ENCODE measurements at regions of chr11 and their contacts with region 1.

Region 1: DNA sequence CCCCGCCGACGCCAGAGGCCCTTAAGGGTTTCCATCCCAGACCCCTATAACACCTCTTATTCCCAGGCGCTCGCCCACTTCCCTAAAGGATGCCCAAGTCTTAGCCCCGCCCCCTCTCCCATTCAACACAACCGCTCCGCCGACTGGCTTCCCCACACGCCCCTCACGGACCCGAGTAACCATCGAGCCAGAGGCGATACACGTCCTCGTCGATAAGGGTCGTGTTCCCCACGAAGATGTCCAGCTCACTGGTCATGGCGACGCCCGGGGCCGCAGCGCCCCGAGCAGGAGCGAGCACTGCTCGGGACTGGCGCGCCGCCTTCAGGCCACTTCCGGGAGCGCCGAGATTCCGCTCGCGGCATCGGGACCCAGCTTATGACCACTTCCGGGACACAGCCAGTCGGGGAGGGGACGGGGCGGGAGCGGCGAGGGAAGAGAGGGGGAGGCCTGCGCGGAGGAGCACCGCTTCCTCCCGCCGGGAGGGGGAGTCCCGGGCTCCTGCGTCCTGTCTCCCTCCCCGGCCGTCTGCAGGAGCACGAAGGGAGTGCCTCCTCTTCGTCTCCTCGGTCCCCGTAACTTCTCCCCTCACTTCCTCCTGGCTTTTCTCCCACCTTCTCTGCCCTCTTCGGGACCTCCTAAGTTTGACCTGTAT is at the start of gene FIBP:
- DNase-seq: peak; percentile 94 to 98 (median 97)
- H3K4me3 ChIP-seq: peak within 1 kb of the TSS; percentile 52 to 99 (median 86)
- H3K27ac ChIP-seq: peak within 1 kb of the TSS; percentile 81 to 100 (median 97)
- H3K27me3 ChIP-seq: no peaks in the 10 kb centered on the region
- CTCF ChIP-seq: peak; percentile 45 to 93 (median 80)
- total RNA-seq, gene FIBP: 56.1 to 115 (median 86.6) TPM

Region 2: DNA sequence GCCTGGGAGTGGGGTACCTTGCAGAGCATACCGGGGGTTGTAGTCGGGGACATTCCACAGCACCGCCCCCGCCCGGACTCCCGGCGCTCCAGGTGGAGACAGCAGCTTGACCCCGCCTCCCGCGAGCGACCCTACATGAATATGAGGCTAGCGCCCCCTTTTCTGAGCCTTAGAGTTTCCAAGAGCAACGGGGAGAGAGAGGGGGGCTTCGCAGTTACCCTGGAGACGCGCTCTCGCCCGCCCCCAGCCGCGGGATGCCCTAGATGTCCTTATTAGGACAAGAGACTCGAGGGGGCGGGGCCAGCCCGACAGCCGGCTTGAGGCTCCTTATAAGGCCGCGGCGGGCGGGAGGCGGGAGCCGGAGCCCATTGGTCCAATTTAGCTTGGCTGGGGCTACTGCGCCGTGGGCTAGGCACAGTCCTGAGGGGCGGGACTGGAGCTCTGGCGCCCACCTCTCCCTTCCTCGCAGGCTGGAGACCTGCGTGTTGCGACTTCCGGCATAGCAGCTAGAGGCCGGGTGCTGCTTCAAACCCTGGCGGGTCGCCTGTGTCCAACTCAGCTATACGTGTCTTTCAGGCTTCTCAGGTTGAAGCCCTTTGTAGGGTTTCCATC is 29.0 kb before region 1 on chr11:
- intact Hi-C with region 1: loop called (anchors 1 kb)
- DNase-seq: peak; percentile 94 to 99 (median 98)
- H3K4me3 ChIP-seq: peak overlapping the region; percentile 65 to 99 (median 93)
- H3K27ac ChIP-seq: peak overlapping the region; percentile 70 to 99 (median 97)
- H3K27me3 ChIP-seq: no peaks in the 10 kb centered on the region
- CTCF ChIP-seq: peak in 28 of 56 donors; percentile 6 to 56 (median 34)

Region 3: DNA sequence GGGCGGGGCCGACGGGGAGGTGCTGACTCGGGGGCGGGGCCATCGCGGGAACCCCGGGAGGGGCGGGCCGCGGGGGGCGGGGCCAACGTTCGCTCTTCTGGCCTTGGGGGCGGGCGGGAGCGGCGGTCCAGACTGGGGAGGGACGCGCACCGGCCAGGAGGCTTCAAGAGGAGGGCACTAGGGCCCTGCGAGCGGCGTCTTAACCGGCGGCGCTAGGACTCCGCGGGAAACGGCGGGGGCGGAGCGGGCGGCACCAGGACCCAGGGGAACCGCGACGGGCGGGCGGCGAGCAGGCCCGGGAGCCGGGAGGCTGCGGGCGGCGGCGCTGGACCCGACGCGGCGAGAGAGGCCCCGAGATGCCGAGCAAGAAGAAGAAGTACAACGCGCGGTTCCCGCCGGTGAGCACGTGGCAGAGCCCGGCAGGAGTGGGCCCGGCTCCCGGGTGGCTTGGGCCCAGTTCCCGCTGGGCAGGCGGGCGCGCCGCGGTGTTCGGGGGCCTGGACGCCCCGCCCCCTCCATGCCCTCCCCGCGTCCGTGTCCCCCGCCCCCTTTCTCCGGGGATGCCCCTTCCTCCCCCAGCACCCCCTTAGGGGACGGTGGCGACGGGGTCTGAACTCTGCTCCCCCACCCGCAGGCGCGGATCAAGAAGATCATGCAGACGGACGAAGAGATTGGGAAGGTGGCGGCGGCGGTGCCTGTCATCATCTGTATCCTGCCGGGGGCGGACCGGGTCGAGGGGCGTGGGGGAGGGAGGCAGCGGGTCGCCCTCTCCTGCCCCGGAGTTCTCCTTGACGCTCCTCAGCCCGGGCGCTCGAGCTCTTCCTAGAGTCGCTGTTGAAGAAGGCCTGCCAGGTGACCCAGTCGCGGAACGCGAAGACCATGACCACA is 31.1 kb after region 1 on chr11 and contains the start of gene DRAP1:
- intact Hi-C with region 1: loop called (anchors 1 to 2 kb)
- DNase-seq: peak; percentile 97 to 100 (median 100)
- H3K4me3 ChIP-seq: peak within 1 kb of the TSS; percentile 73 to 100 (median 98)
- H3K27ac ChIP-seq: peak within 1 kb of the TSS; percentile 72 to 99 (median 95)
- H3K27me3 ChIP-seq: no peaks in the 10 kb centered on the region
- CTCF ChIP-seq: peak in 37 of 56 donors; percentile 7 to 61 (median 34)
- total RNA-seq, gene DRAP1: 54.9 to 148 (median 96.3) TPM

Region 4: GRCh38 chr11:65988791-65989592 is 100.7 kb after region 1 on chr11:
- intact Hi-C with region 1: loop called (anchors 5 kb)
- DNase-seq: peak; percentile 53 to 97 (median 88)
- H3K4me3 ChIP-seq: peak overlapping the region in 4 of 59 donors; percentile 6 to 26 (median 16)
- H3K27ac ChIP-seq: peak overlapping the region in 19 of 59 donors; percentile 0 to 67 (median 37)
- H3K27me3 ChIP-seq: no peaks in the 10 kb centered on the region
- CTCF ChIP-seq: peak; percentile 74 to 99 (median 95)

Region 5: GRCh38 chr11:66001942-66002647 is 113.8 kb after region 1 on chr11 and contains the starts of genes BANF1 and EIF1AD:
- intact Hi-C with region 1: loop called (anchors 5 kb)
- DNase-seq: peak; percentile 82 to 96 (median 92)
- H3K4me3 ChIP-seq: peak within 1 kb of the TSS; percentile 72 to 100 (median 93)
- H3K27ac ChIP-seq: peak within 1 kb of the TSS; percentile 78 to 99 (median 96)
- H3K27me3 ChIP-seq: no peaks in the 10 kb centered on the region
- CTCF ChIP-seq: peak in 32 of 56 donors; percentile 4 to 56 (median 30)
- total RNA-seq, gene BANF1: 89.7 to 186 (median 129) TPM
- total RNA-seq, gene EIF1AD: 25.8 to 57.5 (median 36.4) TPM

Region 6: GRCh38 chr11:66150140-66150539 is 261.9 kb after region 1 on chr11:
- intact Hi-C with region 1: no loop called
- DNase-seq: no peak
- H3K4me3 ChIP-seq: peak overlapping the region in 2 of 59 donors; percentile 14 to 22
- H3K27ac ChIP-seq: no peak overlapping the region
- H3K27me3 ChIP-seq: no peaks in the 10 kb centered on the region
- CTCF ChIP-seq: no peak

Measured in dorsolateral prefrontal cortex (tissue), 120 donors.